SK-N-SH (cell line): ENCODE measurements at regions of chr21 and their contacts with region 1.

Region 1: GRCh38 chr21:31580866-31581276 is 78.6 kb upstream of the SOD1 start:
- DNase-seq: peak; percentile 68
- H3K4me3 ChIP-seq: no peak overlapping the region; a peak in 1 of 4 replicates
- H3K27ac ChIP-seq: no peak overlapping the region
- H3K4me1 ChIP-seq: no peaks in the 10 kb centered on the region
- H3K27me3 ChIP-seq: no peaks in the 10 kb centered on the region
- CTCF ChIP-seq: peak; percentile 83
- EP300 ChIP-seq: no peak
- RAD21 ChIP-seq: peak; percentile 91

Region 2: DNA sequence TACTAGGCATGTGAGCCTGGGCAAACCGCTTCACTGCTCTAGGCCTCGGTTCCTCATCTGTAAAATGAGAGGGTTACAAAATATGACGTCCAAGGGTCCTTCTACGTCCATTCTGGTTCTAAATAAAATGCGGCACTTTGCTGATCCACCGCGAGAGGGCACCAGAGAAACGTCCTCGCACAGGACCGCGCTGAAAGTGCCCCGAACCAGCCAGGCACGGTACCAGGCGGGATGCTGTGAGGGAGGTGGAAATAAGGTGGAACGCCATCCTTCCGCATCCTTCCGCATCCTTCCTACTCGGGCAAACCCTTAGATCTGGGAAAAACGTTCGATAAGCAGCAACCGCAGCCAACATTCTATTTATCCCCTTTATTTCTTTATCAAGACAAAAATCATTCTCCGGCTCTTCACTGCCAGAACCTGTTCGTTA is 482.3 kb before region 1 on chr21:
- CTCF ChIA-PET with region 1: interaction called, 24 read pairs
- POLR2A ChIA-PET with region 1: no interaction called
- DNase-seq: peak; percentile 75
- H3K4me3 ChIP-seq: no peak overlapping the region; a peak in 1 of 4 replicates
- H3K27ac ChIP-seq: no peak overlapping the region
- H3K4me1 ChIP-seq: peaks cover 0 to 2% of the 10 kb centered on the region in 2 experiments; a peak in 1 of 4 replicates
- H3K27me3 ChIP-seq: no peaks in the 10 kb centered on the region; the same call in 1 of the 2 replicates
- CTCF ChIP-seq: peak; percentile 92
- EP300 ChIP-seq: no peak
- RAD21 ChIP-seq: peak; percentile 90

Region 3: GRCh38 chr21:31190516-31190915 is 390.4 kb before region 1 on chr21:
- CTCF ChIA-PET with region 1: interaction called, 32 read pairs
- POLR2A ChIA-PET with region 1: no interaction called
- DNase-seq: no peak
- H3K4me3 ChIP-seq: no peak overlapping the region
- H3K27ac ChIP-seq: no peak overlapping the region
- H3K4me1 ChIP-seq: peaks cover 0 to 4% of the 10 kb centered on the region in 2 experiments; a peak in 1 of 4 replicates
- H3K27me3 ChIP-seq: no peaks in the 10 kb centered on the region
- CTCF ChIP-seq: no peak
- EP300 ChIP-seq: no peak
- RAD21 ChIP-seq: no peak

Region 4: DNA sequence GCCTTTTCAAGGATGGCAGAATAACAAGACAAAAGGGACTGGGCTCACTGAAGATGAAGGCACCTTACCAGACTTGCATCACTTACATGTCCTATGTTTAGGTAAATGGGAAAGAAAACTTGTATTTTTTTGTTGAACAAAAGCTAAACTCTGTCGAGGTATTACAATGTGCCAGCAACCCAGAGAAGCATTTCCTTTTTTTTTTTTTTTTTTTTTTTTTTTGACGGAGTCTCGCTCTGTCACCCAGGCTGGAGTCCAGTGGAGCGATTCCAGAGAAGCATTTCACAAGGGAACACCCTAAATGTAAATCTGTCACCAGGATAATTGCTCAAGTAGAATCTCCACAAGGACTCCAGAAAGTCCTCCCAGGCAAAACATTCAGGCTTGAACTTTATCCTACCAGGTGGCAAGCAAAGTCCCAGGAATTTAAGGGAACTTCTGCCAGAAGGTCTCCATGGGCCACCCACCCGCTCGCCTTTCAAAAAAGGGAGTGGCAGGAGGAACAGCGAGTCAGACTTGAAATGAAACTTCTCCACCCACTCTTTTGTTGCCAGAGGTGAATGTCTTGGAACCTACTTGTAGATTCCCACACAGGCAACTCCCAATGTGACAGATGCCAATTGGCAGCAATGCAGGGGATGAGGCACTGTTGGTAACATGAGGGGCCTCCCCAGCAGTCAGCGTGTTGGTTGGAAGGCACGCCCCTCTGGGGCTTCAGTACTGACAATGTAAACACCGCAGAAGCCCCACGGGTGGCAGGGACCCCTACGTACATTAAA is 361.9 kb before region 1 on chr21:
- CTCF ChIA-PET with region 1: interaction called, 18 read pairs
- POLR2A ChIA-PET with region 1: no interaction called
- DNase-seq: no peak
- H3K4me3 ChIP-seq: no peak overlapping the region
- H3K27ac ChIP-seq: no peak overlapping the region
- H3K4me1 ChIP-seq: peaks cover 0 to 4% of the 10 kb centered on the region in 2 experiments; a peak in 2 of 4 replicates
- H3K27me3 ChIP-seq: no peaks in the 10 kb centered on the region
- CTCF ChIP-seq: no peak
- EP300 ChIP-seq: no peak
- RAD21 ChIP-seq: no peak

Region 5: GRCh38 chr21:31293986-31294385 is 286.9 kb before region 1 on chr21:
- CTCF ChIA-PET with region 1: no interaction called
- POLR2A ChIA-PET with region 1: no interaction called
- DNase-seq: no peak
- H3K4me3 ChIP-seq: no peak overlapping the region
- H3K27ac ChIP-seq: peak overlapping the region; percentile 41 to 52; a peak in 3 of 4 replicates
- H3K4me1 ChIP-seq: 0 out of 4 replicates have a peak, but pooled peaks cover 0 to 7% of the 10 kb centered on the region in 2 experiments
- H3K27me3 ChIP-seq: no peaks in the 10 kb centered on the region
- CTCF ChIP-seq: no peak
- EP300 ChIP-seq: peak in 1 of 2 experiments; percentile 86; a peak in 1 of 4 replicates
- RAD21 ChIP-seq: no peak

Region 6: GRCh38 chr21:31514598-31514997 is 66.3 kb before region 1 on chr21:
- CTCF ChIA-PET with region 1: interaction called, 26 read pairs
- POLR2A ChIA-PET with region 1: no interaction called
- DNase-seq: peak; percentile 78
- H3K4me3 ChIP-seq: no peak overlapping the region
- H3K27ac ChIP-seq: peak overlapping the region in 1 of 2 experiments; percentile 30; a peak in 1 of 4 replicates
- H3K4me1 ChIP-seq: peaks cover 0 to 11% of the 10 kb centered on the region in 2 experiments; a peak in 1 of 4 replicates
- H3K27me3 ChIP-seq: no peaks in the 10 kb centered on the region
- CTCF ChIP-seq: peak; percentile 23; the same call in 1 of the 2 replicates
- EP300 ChIP-seq: peak in 1 of 2 experiments; percentile 39; a peak in 1 of 4 replicates
- RAD21 ChIP-seq: peak; percentile 71

Region 7: DNA sequence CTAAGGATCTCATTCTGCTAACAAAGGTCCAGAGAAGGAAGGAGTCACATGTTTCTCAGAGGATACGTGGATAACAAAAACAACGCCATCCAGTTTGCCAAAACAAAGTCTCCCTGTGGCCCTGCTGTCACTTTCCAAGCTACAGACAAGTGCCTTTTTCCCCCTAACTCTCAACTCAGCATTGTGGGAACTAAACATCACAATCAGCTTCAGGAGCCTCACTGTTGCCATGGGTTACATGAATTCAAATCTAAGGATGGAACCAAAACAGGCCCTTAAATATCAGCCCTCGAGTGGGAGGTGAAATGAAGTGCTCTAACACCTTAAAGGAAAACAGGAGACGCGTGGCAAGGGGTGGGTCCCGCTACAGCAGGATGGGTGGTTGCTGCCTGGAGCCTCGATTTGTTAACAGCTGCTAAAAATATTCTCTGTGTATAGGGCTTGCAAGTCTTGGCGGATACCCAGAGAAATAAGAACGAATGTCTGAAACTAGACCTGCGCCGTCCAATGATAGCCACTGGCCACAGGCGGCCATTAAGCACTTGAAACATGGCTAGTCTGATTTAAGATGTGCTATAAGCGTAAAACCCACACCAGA is 12.2 kb after region 1 on chr21:
- CTCF ChIA-PET with region 1: interaction called, 20 read pairs
- POLR2A ChIA-PET with region 1: no interaction called
- DNase-seq: no peak
- H3K4me3 ChIP-seq: no peak overlapping the region
- H3K27ac ChIP-seq: no peak overlapping the region
- H3K4me1 ChIP-seq: no peaks in the 10 kb centered on the region
- H3K27me3 ChIP-seq: no peaks in the 10 kb centered on the region
- CTCF ChIP-seq: no peak
- EP300 ChIP-seq: no peak
- RAD21 ChIP-seq: no peak

Region 8: DNA sequence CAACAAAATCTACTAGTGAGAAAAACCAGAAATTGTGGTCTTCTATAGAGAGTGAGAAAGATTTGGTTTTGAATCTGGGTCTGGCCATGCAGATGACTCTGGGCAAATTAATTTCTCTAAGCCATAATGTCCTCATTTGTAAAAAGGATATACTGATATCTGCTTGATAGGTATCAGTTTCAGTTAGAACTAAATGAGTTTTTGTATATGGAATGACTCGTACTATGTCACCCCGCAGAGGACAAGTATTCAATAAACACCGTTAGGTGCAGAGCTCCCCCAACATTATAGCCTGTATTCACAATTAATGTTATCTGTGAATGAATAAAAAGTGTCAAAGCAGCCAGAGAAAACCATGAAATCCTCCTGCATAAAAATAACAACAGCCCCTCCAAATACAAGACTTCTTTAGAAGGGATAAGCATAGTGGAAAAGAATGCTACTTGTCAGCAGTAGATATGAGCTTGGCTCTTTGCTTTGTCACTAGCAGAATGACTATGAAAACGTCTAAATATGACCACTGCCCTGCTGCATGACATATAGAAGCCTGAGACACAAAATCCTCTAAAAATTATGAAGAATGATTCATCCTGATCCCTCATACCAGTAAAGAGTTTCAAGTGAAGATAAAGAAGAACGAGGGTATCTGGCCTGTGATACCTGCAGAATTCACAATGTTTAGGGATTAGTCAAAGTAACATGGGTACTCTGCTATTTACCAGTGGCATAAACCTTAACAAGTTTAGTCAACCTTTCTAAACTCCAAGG is 133.3 kb after region 1 on chr21:
- CTCF ChIA-PET with region 1: no interaction called
- POLR2A ChIA-PET with region 1: no interaction called
- DNase-seq: no peak
- H3K4me3 ChIP-seq: no peak overlapping the region
- H3K27ac ChIP-seq: peak overlapping the region; percentile 18 to 39
- H3K4me1 ChIP-seq: peaks cover 4 to 37% of the 10 kb centered on the region in 2 experiments; a peak in 3 of 4 replicates
- H3K27me3 ChIP-seq: no peaks in the 10 kb centered on the region
- CTCF ChIP-seq: no peak
- EP300 ChIP-seq: no peak
- RAD21 ChIP-seq: no peak